ENCODE measurements at regions of chr12 and their contacts with region 1.

Region 1: GRCh38 chr12:107131832-107132616 is 38.7 kb upstream of the CRY1 start:
- DNase-seq: peak; percentile 44
- H3K4me3 Mint-ChIP-seq: no peak overlapping the region
- H3K27ac Mint-ChIP-seq: no peak overlapping the region
- H3K4me1 Mint-ChIP-seq: no peaks in the 10 kb centered on the region
- H3K27me3 Mint-ChIP-seq: peaks cover 28% of the 10 kb centered on the region
- CTCF ChIP-seq: peak; percentile 71

Region 2: GRCh38 chr12:107317751-107318613 is 186.0 kb after region 1 on chr12:
- CTCF ChIA-PET with region 1: no interaction called
- intact Hi-C with region 1: loop called (anchors 2 kb)
- DNase-seq: peak; percentile 92
- H3K4me3 Mint-ChIP-seq: peak overlapping the region; percentile 91
- H3K27ac Mint-ChIP-seq: peak overlapping the region; percentile 71
- H3K4me1 Mint-ChIP-seq: peaks cover 23% of the 10 kb centered on the region
- H3K27me3 Mint-ChIP-seq: peaks cover 75% of the 10 kb centered on the region
- CTCF ChIP-seq: peak; percentile 63

Region 3: GRCh38 chr12:107379852-107380567 is 248.0 kb after region 1 on chr12:
- CTCF ChIA-PET with region 1: no interaction called
- intact Hi-C with region 1: no loop called
- DNase-seq: peak; percentile 75
- H3K4me3 Mint-ChIP-seq: peak overlapping the region; percentile 63
- H3K27ac Mint-ChIP-seq: peak overlapping the region; percentile 57
- H3K4me1 Mint-ChIP-seq: peaks cover 16% of the 10 kb centered on the region
- H3K27me3 Mint-ChIP-seq: no peaks in the 10 kb centered on the region
- CTCF ChIP-seq: no peak

Region 4: DNA sequence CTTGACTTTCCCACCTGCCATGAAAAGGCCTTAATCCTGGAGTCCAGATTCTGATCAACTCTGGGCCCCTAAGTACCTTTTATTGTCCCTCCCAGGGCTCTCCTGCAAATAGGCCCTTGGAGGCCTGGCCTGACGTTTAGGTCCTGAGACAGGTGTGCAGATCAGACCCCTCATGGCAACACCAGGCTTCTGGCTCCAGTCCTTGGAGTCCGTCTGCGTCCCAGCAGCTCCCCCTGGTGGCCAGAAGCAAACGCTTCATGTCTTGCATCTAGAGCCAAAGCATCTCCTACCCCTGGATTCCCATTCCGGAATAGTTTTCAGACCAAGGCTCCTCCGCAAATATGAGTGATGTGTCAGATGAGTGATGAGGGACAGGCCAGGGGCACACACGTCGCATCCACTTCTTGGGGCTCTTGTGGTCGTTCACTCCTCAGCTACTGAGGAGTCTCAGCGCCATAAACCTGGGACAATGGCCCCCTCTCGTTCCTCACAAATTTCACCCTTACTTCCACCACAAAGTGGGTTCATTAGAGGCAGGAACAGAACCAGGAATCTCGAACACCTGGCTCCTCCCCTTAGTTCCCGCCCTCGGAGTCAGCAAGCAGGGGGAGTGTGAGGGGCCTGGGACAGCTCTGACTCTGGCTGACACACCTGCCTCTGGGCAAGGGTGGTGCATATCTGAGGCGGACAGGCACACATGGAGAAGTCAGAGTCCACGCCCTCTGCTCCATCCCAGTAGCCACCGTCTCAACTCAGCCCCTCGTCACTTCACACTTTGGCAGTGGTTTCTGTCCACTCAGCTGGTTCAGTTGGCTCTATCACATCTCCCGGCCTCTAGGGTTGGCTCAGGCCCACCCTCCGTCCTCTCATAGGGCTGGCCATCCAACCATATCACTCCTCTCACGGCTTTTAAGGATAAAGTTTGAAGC is 475.7 kb after region 1 on chr12:
- CTCF ChIA-PET with region 1: interaction called, 16 read pairs
- intact Hi-C with region 1: loop called (anchors 1 kb)
- DNase-seq: peak; percentile 89
- H3K4me3 Mint-ChIP-seq: no peak overlapping the region
- H3K27ac Mint-ChIP-seq: no peak overlapping the region
- H3K4me1 Mint-ChIP-seq: no peaks in the 10 kb centered on the region
- H3K27me3 Mint-ChIP-seq: peaks cover 61% of the 10 kb centered on the region
- CTCF ChIP-seq: peak; percentile 90

Region 5: DNA sequence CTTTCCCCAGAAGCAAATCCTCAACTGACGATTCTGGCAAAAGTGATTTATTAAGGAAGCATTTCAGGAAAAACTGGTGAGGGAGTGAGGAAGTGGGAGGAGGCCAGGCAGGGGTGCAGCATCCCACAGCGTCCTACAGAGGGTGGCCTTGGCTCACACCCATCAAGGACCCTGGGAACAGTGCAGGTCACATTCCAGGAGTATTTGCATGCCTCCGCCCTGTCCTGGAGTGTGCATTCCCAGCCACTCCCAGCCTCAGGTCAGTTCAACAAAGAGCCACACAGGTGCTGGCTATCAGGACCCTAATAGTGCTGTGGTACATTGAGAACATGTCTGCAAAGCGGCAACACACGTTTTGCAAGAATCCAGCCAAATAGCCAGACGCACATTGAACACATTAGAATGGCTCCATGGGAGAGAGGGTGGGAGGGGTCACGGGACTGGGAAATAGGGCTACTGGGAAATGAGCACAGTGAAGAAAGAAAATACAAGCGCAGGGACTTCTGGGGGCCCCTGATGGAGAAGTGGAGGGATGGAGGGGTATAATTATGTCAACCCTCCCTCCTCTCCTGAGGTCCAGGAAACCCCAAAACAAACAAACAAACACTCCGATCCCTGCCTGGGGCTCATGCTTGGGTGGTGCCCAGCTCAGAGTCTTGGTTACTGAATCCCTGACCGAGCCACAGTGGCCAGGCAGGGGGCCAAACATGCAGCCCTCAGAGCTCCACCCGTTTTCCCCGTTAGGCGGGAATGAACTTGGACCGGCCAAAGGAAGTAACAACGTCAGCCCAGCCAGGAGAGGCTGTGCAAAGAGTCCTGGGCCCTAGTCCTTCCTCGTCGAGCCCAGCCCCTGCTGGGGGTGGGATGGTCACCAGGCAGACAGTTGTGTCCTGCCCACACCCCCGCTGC is 1170.6 kb after region 1 on chr12:
- CTCF ChIA-PET with region 1: no interaction called
- intact Hi-C with region 1: no loop called
- DNase-seq: peak; percentile 75
- H3K4me3 Mint-ChIP-seq: peak overlapping the region; percentile 19
- H3K27ac Mint-ChIP-seq: peak overlapping the region; percentile 74
- H3K4me1 Mint-ChIP-seq: peaks cover 82% of the 10 kb centered on the region
- H3K27me3 Mint-ChIP-seq: no peaks in the 10 kb centered on the region
- CTCF ChIP-seq: no peak

Measured in Calu3 (cell line).